ENCODE measurements at regions of chr5 and their contacts with region 1.

Region 1: GRCh38 chr5:129172580-129172979 is 78.0 kb downstream of the ISOC1 start:
- DNase-seq: peak; percentile 12
- ATAC-seq: 0 out of 2 replicates have a peak, but pooled peaks have one; percentile 42
- H3K4me3 ChIP-seq: no peak overlapping the region
- H3K27ac ChIP-seq: no peak overlapping the region
- H3K4me1 ChIP-seq: no peaks in the 10 kb centered on the region
- H3K27me3 ChIP-seq: no peaks in the 10 kb centered on the region
- CTCF ChIP-seq: peak in 2 of 3 experiments; percentile 37 to 79; a peak in 2 of 6 replicates
- POLR2A ChIP-seq: no peak
- RAD21 ChIP-seq: peak; percentile 67

Region 2: DNA sequence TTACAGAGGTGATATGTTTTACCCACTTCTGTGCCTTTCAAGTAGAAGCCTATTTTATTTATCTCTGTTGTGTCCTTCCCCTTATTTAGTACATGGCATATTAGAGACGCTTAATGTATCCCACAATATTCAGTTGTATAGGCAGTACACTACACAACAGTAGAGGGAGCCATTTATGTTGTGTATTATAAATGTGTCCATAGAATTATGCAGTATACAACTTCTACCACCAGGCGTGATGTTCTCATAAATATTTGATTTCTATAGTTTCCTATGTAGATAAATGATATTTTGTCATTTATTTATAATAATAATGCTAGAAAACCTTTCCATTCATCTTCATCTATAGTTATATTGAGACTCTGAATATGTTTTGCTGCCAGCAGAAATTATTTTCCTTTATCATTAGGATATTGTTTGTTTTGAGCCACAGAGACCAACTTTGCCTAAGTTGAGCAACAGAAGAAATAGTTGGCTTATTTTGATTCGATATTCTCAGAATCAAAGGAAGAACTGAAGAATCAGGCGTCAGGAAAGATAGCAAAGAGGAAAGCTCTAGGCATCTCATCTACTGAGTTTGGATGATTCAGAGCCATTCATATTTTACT is 369.2 kb after region 1 on chr5:
- CTCF ChIA-PET with region 1: no interaction called
- POLR2A ChIA-PET with region 1: no interaction called
- RAD21 ChIA-PET with region 1: no interaction called
- intact Hi-C with region 1: loop called (anchors 10 kb)
- DNase-seq: peak; percentile 48
- ATAC-seq: peak; percentile 98
- H3K4me3 ChIP-seq: no peak overlapping the region
- H3K27ac ChIP-seq: no peak overlapping the region
- H3K4me1 ChIP-seq: no peaks in the 10 kb centered on the region
- H3K27me3 ChIP-seq: no peaks in the 10 kb centered on the region
- CTCF ChIP-seq: peak; percentile 59 to 95 (median 74)
- POLR2A ChIP-seq: no peak
- RAD21 ChIP-seq: peak; percentile 58